Vagina (tissue), 2 donors: ENCODE measurements at regions of chr4 and their contacts with region 1.

Region 1: GRCh38 chr4:48830706-48831531 is at the start of gene OCIAD1:
- DNase-seq: peak; percentile 98 to 99
- H3K4me3 ChIP-seq: peak within 1 kb of the TSS; percentile 76 to 97
- H3K27ac ChIP-seq: peak within 1 kb of the TSS; percentile 96
- H3K4me1 ChIP-seq: peaks cover 17% of the 10 kb centered on the region
- H3K27me3 ChIP-seq: no peaks in the 10 kb centered on the region
- CTCF ChIP-seq: no peak
- POLR2A ChIP-seq: no peak
- total RNA-seq, gene OCIAD1: 72.4 TPM

Region 2: DNA sequence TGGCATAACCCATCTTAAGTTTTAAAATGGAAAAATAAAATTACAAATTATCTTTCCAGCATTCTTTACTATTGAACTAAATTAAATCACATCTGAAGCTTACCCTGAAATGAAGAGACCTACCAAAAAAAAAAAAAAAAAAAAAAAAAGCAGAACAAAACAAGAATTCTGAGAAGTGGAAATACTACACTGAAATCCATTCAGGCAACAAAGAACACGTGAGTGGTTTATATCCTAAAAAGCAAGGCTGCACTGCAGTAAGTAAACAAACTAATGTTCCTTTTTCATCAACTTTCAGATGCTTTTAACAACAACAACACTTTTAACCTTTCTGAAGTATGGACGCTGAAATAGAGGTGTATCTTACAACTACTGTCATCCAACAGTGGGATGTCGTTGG is 58.4 kb before region 1 on chr4:
- intact Hi-C with region 1: loop called (anchors 2 kb)
- DNase-seq: no peak
- H3K4me3 ChIP-seq: no peak overlapping the region
- H3K27ac ChIP-seq: no peak overlapping the region
- H3K4me1 ChIP-seq: peaks cover 76% of the 10 kb centered on the region
- H3K27me3 ChIP-seq: no peaks in the 10 kb centered on the region
- CTCF ChIP-seq: no peak
- POLR2A ChIP-seq: no peak

Region 3: DNA sequence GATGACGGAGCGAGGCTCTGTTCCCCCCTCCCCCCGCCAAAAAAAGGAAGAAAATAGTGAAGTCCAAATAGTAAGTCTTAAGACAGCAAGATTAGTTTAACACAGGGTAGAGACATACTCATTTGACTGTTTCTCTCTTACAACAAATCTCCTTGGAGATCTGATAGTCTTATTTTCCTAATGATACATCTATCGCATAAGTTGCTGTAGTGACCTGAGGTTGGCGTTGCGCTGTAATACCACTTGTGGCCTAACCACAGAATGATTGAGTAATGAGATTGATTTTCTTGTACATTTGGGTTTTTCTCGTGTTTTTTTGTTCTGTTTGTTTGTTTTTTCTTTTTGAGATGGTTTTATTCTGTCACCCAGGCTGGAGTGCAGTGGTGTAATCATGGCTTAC is 27.2 kb after region 1 on chr4:
- intact Hi-C with region 1: no loop called
- DNase-seq: no peak
- H3K4me3 ChIP-seq: no peak overlapping the region
- H3K27ac ChIP-seq: no peak overlapping the region
- H3K4me1 ChIP-seq: no peaks in the 10 kb centered on the region
- H3K27me3 ChIP-seq: no peaks in the 10 kb centered on the region
- CTCF ChIP-seq: no peak
- POLR2A ChIP-seq: no peak

Region 4: GRCh38 chr4:48879541-48880442 is 48.9 kb after region 1 on chr4:
- intact Hi-C with region 1: no loop called
- DNase-seq: no peak
- H3K4me3 ChIP-seq: no peak overlapping the region
- H3K27ac ChIP-seq: no peak overlapping the region
- H3K4me1 ChIP-seq: no peaks in the 10 kb centered on the region
- H3K27me3 ChIP-seq: no peaks in the 10 kb centered on the region
- CTCF ChIP-seq: no peak
- POLR2A ChIP-seq: no peak